Posterior vena cava (tissue), 2 donors: ENCODE measurements at regions of chr4 and their contacts with region 1.

Region 1: DNA sequence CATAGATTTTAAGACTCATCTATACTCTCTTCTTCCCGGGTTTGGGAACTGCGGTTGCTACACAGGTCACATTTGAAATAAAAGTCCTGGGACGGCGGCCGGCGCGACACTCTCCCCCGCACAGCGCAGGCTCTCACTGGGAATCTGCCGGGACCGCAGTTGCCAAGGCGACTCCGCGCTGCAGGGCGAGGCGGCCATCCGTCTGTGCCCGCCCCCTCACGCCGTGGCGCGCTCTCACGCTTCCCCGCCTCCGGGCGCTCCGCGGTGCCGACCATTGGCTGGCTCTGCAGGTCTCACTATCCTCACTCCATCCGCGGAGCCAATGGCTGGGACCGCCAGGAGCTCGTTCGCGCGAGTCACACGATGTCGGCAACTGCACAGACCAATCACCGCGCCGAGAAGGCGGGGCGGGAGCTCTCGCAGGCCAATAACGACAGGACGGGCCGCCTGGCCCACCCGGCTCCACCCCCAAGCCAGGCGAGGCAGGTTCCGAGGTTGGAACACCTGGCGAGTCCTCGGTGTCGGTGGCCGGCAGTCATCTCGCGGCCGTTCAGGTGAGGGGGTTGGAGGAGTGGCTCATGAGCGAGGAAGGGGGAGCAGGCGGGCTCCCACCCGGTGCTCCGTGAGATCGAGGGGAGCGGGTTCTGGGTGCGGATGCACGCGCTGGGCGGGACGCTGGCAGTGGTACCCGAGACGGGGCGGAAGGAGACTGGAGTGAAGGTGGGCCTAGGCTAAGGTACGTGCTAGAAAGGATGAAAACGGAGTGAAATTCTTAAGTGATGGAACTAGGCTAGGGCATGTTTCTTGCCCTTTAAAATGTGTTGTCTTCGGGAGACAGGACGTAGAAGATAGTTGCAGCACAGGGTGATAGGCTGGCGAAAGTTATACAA is at the start of gene MSMO1:
- DNase-seq: peak; percentile 100
- total RNA-seq, gene MSMO1: 21.5 to 26.8 TPM

Region 2: GRCh38 chr4:165207431-165208220 is 119.8 kb before region 1 on chr4 and contains the start of gene KLHL2:
- intact Hi-C with region 1: loop called in 1 of 2 experiments (anchors 10 kb)
- DNase-seq: peak; percentile 94
- total RNA-seq, gene KLHL2: 23.8 to 26.6 TPM